Activated B cell treated with CpG ODN at 0.5 μM for 24 hours (primary cell): ENCODE measurements at regions of chr5 and their contacts with region 1.

Region 1: DNA sequence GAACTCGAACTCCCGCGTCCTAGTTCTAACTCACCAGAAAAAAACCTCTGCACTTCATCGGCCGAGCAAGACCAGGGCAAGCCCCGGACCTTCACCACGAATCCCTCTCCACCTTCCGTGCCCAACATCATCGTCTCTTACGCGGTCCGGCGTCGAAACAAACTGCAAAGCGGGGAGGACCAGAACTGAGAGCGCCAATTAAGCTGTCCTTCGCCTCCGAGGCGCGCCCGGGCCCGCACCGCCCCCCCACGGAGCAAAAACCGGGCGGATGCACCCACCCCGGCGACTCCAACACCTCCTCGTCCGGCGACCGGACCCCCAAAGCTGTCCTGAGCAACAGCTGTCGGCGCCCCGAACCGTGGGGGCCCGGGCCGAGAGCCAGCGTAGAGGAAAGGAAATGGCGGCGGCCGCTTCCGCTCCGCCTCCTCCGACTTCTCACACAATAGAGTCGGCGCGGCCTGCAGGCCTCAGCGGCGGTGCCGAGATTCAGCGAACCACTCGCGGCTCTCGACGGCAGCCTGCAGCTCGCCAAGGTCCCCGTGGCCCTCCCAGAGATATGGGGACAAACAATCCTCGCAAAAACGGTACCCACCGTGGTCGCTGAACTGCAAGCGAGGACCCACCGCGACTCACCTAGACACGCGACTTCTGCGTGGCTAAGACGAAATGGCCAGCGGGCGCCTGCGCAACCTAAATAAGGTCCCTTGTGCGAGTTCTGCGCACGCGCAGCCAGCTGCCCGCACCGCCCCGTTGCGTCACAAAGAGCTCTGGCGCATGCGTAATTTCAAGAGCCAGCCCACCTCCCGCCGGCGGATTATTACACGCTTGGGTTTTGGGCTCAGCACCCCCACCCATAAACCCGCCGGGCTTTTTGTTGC is at the start of gene HNRNPH1:
- DNase-seq: peak; percentile 93
- ATAC-seq: peak; percentile 80
- H3K4me3 Mint-ChIP-seq: peak within 1 kb of the TSS; percentile 98
- H3K27ac Mint-ChIP-seq: peak within 1 kb of the TSS; percentile 99
- H3K4me1 Mint-ChIP-seq: peaks cover 50% of the 10 kb centered on the region
- H3K27me3 Mint-ChIP-seq: no peaks in the 10 kb centered on the region
- CTCF ChIP-seq: no peak
- total RNA-seq, gene HNRNPH1: 1,061 and 1,210 TPM in 2 replicates

Region 2: DNA sequence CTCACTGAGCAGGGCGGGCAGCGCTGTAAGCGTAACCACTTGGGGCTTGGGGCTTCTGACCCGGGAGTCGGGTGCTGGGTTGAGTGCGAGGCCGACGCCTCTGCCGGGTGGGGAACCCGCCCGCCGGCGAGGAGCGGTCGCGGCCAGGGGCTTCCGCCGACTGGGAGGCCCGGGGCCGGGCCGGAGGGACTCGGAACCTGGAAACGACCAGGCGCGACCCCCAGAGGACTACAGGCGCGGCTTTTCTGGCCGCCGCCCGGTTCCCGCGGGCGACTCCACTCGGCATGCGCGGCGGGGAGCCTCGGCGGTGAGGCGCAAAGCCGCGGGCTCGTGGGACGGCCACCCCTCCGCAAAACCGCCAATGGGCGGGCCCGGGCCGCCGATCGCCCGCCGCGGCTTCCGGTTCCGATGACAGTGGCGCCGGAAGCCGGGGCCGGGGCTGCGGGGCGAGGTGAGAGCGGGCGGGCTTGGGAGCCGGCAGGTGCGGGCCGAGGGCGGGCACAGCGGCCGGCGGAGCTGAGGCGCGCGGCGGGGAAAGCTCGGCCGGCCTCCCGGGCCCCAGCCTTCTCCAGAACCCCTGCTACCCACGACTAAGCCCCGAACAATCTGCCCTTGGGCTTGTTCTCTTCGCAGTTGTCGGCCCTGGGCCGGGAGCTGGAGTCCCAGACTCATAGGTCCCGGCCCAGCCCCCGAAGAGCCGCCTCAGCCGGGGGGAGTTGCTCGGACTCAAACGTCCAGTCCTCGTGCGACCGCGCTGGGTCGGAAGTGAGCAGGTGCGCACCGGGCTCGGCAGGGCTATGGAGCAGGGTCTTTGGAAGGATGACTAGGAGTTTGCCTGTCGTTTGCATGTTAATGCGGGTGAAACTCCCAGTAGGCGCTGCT is 1492.4 kb before region 1 on chr5 and contains the start of gene RMND5B:
- CTCF ChIA-PET with region 1: no interaction called
- POLR2A ChIA-PET with region 1: no interaction called
- intact Hi-C with region 1: loop called (anchors 5 kb)
- DNase-seq: peak; percentile 86
- ATAC-seq: peak; percentile 89
- H3K4me3 Mint-ChIP-seq: peak within 1 kb of the TSS; percentile 85
- H3K27ac Mint-ChIP-seq: peak within 1 kb of the TSS; percentile 74
- H3K4me1 Mint-ChIP-seq: peaks cover 21% of the 10 kb centered on the region
- H3K27me3 Mint-ChIP-seq: no peaks in the 10 kb centered on the region
- CTCF ChIP-seq: no peak
- total RNA-seq, gene RMND5B: 42.4 and 57.2 TPM in 2 replicates

Region 3: GRCh38 chr5:179550511-179551230 is 72.6 kb before region 1 on chr5 and contains the start of gene RUFY1:
- CTCF ChIA-PET with region 1: no interaction called
- POLR2A ChIA-PET with region 1: interaction called, 36 read pairs
- intact Hi-C with region 1: loop called (anchors 2 kb)
- DNase-seq: peak; percentile 91
- ATAC-seq: peak; percentile 70
- H3K4me3 Mint-ChIP-seq: peak within 1 kb of the TSS; percentile 97
- H3K27ac Mint-ChIP-seq: peak within 1 kb of the TSS; percentile 100
- H3K4me1 Mint-ChIP-seq: peaks cover 60% of the 10 kb centered on the region
- H3K27me3 Mint-ChIP-seq: no peaks in the 10 kb centered on the region
- CTCF ChIP-seq: no peak
- total RNA-seq, gene RUFY1: 83.0 and 95.8 TPM in 2 replicates

Region 4: GRCh38 chr5:179608131-179608581 is 15.1 kb before region 1 on chr5:
- CTCF ChIA-PET with region 1: no interaction called
- POLR2A ChIA-PET with region 1: interaction called, 93 read pairs
- intact Hi-C with region 1: no loop called
- DNase-seq: no peak
- ATAC-seq: no peak
- H3K4me3 Mint-ChIP-seq: no peak overlapping the region
- H3K27ac Mint-ChIP-seq: no peak overlapping the region
- H3K4me1 Mint-ChIP-seq: no peaks in the 10 kb centered on the region
- H3K27me3 Mint-ChIP-seq: no peaks in the 10 kb centered on the region
- CTCF ChIP-seq: no peak

Region 5: DNA sequence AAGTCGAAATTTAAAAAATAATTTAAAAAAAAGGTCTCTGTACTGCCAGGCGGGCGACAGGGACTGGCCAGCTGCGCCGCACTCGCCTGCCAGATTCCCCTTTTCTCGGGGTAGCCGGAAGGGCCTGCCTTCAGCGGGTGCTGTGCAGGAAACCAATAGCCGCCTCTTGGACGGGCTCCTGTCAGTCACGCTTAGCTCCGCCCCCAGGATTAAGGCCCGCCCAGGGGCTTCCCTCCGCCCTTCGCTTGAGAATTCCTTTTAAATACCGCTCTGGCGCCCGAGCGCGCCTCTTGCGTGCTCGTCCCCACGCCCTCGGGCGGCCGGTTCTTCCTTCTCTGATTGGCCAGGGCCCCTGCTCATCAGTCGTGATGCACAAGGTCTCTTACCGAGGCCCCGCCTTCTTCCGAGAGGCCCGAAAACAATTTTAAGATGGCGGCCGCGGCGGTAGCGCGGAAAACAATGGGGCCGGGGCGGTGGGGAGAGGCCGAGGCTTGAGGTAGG is 109.2 kb after region 1 on chr5 and contains the start of gene MAML1:
- CTCF ChIA-PET with region 1: interaction called, 3 read pairs
- POLR2A ChIA-PET with region 1: interaction called, 32 read pairs
- intact Hi-C with region 1: loop called (anchors 1 kb)
- DNase-seq: peak; percentile 98
- ATAC-seq: peak; percentile 93
- H3K4me3 Mint-ChIP-seq: peak within 1 kb of the TSS; percentile 93
- H3K27ac Mint-ChIP-seq: peak within 1 kb of the TSS; percentile 91
- H3K4me1 Mint-ChIP-seq: peaks cover 37% of the 10 kb centered on the region
- H3K27me3 Mint-ChIP-seq: no peaks in the 10 kb centered on the region
- CTCF ChIP-seq: no peak
- total RNA-seq, gene MAML1: 33.6 and 38.8 TPM in 2 replicates

Region 6: GRCh38 chr5:179858586-179859427 is 235.6 kb after region 1 on chr5 and contains the start of gene MRNIP:
- CTCF ChIA-PET with region 1: no interaction called
- POLR2A ChIA-PET with region 1: interaction called, 3 read pairs
- intact Hi-C with region 1: loop called (anchors 2 kb)
- DNase-seq: peak; percentile 92
- ATAC-seq: peak; percentile 94
- H3K4me3 Mint-ChIP-seq: peak within 1 kb of the TSS; percentile 96
- H3K27ac Mint-ChIP-seq: peak within 1 kb of the TSS; percentile 89
- H3K4me1 Mint-ChIP-seq: peaks cover 33% of the 10 kb centered on the region
- H3K27me3 Mint-ChIP-seq: no peaks in the 10 kb centered on the region
- CTCF ChIP-seq: no peak
- total RNA-seq, gene MRNIP: 54.6 and 70.0 TPM in 2 replicates